H1 (cell line): ENCODE measurements at regions of chr3 and their contacts with region 1.

Region 1: DNA sequence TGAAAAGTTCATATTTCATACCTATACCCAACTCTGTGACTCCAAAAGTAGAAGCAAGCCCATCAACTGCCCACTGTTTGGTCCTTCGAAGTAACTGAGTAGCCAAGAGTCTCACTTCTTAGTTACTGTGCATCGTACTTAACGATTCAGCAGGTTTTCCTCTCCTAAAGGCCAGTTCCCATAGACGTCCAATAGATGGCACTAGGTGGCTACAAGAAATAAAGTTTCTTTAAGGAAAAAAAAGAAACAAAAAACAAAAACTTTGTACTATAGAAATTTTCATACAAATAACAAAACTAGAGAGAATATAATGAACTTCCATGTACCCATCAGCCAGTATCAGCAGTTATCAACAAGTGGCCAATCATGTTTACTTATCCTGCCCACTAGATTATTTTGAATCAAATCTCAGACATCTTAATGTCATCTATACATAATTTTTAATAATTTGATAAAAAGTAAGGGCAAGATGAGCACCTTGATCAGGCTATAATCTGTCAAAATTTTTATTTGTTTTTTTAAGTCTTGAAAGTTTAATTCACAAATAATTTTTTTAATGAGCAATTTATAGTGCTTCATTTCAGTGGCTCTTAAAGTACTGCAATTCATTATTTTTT is 63.8 kb upstream of the ACP3 start:
- DNase-seq: no peak
- H3K4me3 ChIP-seq: no peak overlapping the region
- H3K27ac ChIP-seq: no peak overlapping the region
- H3K4me1 ChIP-seq: 0 out of 7 replicates have a peak, but pooled peaks cover 0 to 2% (median 0%) of the 10 kb centered on the region in 4 experiments
- H3K27me3 ChIP-seq: no peaks in the 10 kb centered on the region
- CTCF ChIP-seq: peak in 2 of 3 experiments; percentile 57 to 68; a peak in 3 of 4 replicates
- EP300 ChIP-seq: no peak
- POLR2A ChIP-seq: no peak
- RAD21 ChIP-seq: peak; percentile 73 to 78

Region 2: DNA sequence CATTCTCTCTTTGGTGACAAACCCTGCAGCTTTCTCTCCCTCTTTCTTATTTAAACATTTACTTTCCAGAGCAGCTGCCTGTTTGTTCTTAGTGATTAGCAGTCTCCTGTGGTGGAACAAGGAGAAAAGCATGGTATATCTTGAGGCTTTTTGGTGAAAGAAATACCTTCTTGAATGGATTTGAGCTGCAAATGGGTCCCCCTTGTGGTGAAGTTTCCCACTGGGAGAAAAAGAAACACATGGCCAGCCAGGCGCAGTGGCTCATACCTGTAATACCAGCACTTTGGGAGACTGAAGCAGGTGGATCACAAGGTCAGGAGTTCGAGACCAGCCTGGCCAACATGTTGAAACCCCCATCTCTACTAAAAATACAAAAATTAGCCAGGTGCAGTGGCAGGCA is 15.6 kb after region 1 on chr3:
- CTCF ChIA-PET with region 1: interaction called, 59 read pairs
- POLR2A ChIA-PET with region 1: no interaction called
- DNase-seq: peak in 1 of 2 experiments; percentile 54
- H3K4me3 ChIP-seq: no peak overlapping the region
- H3K27ac ChIP-seq: no peak overlapping the region
- H3K4me1 ChIP-seq: peaks cover 0 to 3% (median 0%) of the 10 kb centered on the region in 4 experiments; a peak in 1 of 7 replicates
- H3K27me3 ChIP-seq: no peaks in the 10 kb centered on the region
- CTCF ChIP-seq: peak; percentile 34 to 68 (median 60)
- EP300 ChIP-seq: no peak
- POLR2A ChIP-seq: no peak
- RAD21 ChIP-seq: peak; percentile 29 to 59

Region 3: DNA sequence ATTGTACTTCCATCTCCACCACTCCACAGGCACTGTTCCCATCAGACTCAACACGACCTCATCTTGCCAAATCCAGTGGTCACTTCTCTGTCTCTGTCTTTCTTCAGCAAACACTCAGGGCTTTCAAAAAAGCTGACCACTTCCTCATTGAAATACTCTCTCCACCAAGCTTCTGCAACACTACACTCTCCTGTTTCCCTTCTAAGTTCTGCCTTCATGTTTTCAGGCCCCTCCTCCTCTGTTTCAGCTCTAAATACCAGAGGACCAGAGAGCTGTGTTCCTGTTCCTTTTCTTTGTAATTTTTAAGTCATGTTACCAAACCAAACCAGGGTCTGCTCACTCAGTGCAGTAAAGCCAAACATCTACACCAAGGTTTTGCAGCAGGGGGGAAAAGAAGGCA is 30.1 kb after region 1 on chr3:
- CTCF ChIA-PET with region 1: interaction called, 10 read pairs
- POLR2A ChIA-PET with region 1: no interaction called
- DNase-seq: no peak
- H3K4me3 ChIP-seq: no peak overlapping the region
- H3K27ac ChIP-seq: no peak overlapping the region
- H3K4me1 ChIP-seq: peaks cover 10 to 22% (median 11%) of the 10 kb centered on the region in 4 experiments
- H3K27me3 ChIP-seq: no peaks in the 10 kb centered on the region
- CTCF ChIP-seq: no peak
- EP300 ChIP-seq: no peak
- POLR2A ChIP-seq: no peak
- RAD21 ChIP-seq: no peak

Region 4: DNA sequence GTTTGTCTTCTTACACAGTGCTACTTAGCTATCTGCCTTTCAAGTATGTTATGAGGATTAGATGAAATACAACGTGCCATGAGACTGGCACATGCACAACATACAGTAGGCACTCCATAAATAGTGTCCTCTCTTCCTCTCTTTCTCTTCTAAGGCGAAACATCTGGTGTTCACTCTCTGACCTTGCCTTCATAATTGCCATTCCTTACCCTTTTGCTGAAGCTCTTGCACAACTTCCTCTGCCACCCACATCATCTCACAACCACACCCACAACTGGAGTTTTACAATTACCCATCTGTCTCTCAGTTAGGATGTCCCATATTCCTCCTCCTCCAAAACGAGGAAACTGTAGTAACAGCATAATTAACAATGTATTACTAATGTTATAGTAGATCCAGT is 37.5 kb after region 1 on chr3:
- CTCF ChIA-PET with region 1: interaction called, 10 read pairs
- POLR2A ChIA-PET with region 1: no interaction called
- DNase-seq: no peak
- H3K4me3 ChIP-seq: no peak overlapping the region
- H3K27ac ChIP-seq: no peak overlapping the region
- H3K4me1 ChIP-seq: peaks cover 0 to 8% (median 0%) of the 10 kb centered on the region in 4 experiments; a peak in 2 of 7 replicates
- H3K27me3 ChIP-seq: no peaks in the 10 kb centered on the region
- CTCF ChIP-seq: no peak
- EP300 ChIP-seq: no peak
- POLR2A ChIP-seq: no peak
- RAD21 ChIP-seq: no peak

Region 5: GRCh38 chr3:132352541-132353143 is 99.3 kb after region 1 on chr3:
- CTCF ChIA-PET with region 1: interaction called, 226 read pairs
- POLR2A ChIA-PET with region 1: no interaction called
- DNase-seq: peak in 1 of 2 experiments; percentile 76
- H3K4me3 ChIP-seq: no peak overlapping the region
- H3K27ac ChIP-seq: no peak overlapping the region
- H3K4me1 ChIP-seq: peaks cover 0 to 16% (median 8%) of the 10 kb centered on the region in 4 experiments; a peak in 3 of 7 replicates
- H3K27me3 ChIP-seq: no peaks in the 10 kb centered on the region
- CTCF ChIP-seq: peak in 2 of 3 experiments; percentile 80 to 93; a peak in 3 of 4 replicates
- EP300 ChIP-seq: no peak
- POLR2A ChIP-seq: no peak
- RAD21 ChIP-seq: peak; percentile 95 to 97

Region 6: DNA sequence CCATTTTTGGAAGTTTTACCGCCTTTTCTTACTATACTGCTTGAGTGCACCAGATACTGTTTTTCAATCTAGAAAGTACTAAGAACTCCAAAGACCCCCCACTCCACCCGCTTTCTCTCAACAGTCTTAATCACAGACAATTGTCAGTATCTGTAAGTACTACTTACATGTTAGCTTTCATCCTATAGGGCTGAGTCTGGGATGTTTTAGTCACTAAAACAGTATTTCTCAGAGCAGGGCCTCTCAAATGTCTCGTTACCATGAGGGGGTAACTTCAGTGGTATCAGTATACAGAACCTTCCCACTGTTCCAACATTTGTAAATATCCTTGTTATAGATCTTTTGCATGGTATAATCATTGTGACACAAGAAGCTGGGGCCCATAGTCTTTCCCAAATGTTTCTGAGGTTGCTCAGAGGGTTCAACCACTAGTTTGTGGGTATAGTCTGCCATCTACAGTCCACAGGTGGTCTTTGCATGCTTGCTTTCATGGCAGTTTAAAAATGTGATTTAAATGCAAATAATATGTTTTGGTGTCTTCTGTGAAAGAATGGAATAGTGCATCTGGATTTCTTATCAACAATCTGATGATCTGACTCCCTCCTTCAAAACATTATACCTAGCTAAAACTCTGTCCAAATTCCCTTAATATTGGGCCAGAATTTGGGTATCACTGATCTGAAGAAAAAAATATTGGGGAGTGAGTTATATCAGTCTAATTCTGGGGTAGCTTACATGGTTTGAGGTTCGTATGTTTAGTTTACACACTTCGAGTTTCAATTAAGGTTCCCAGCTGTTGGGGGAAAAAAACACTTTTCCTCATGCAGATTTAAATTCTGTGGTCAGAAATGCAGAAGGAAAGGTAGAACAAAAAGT is 145.9 kb after region 1 on chr3:
- CTCF ChIA-PET with region 1: interaction called, 140 read pairs
- POLR2A ChIA-PET with region 1: no interaction called
- DNase-seq: no peak
- H3K4me3 ChIP-seq: no peak overlapping the region
- H3K27ac ChIP-seq: no peak overlapping the region
- H3K4me1 ChIP-seq: 0 out of 7 replicates have a peak, but pooled peaks cover 0 to 5% (median 0%) of the 10 kb centered on the region in 4 experiments
- H3K27me3 ChIP-seq: no peaks in the 10 kb centered on the region
- CTCF ChIP-seq: peak in 2 of 3 experiments; percentile 86 to 89; a peak in 3 of 4 replicates
- EP300 ChIP-seq: peak in 1 of 2 experiments; percentile 12; a peak in 1 of 3 replicates
- POLR2A ChIP-seq: no peak
- RAD21 ChIP-seq: peak; percentile 98 to 99

Region 7: DNA sequence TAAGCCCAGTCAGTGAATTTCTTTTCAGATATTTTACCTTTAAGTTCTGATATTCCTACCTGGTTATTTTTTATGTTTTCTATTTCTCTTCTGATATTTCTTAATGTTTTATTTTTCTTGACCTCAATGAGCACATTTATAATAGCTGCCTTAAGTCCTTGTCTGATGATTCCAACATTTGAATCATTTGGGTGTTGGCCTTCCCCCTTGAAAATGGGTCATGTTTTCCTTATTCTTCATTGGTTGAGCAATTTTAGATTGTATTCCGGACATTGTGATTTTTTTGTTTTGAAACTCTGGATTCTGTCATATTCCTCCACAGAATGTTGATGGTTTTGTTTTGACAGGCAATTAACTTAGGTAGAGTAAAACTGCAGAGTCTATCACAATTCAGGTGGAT is 334.0 kb after region 1 on chr3:
- CTCF ChIA-PET with region 1: no interaction called
- POLR2A ChIA-PET with region 1: no interaction called
- DNase-seq: no peak
- H3K4me3 ChIP-seq: no peak overlapping the region
- H3K27ac ChIP-seq: no peak overlapping the region
- H3K4me1 ChIP-seq: no peaks in the 10 kb centered on the region
- H3K27me3 ChIP-seq: no peaks in the 10 kb centered on the region
- CTCF ChIP-seq: no peak
- EP300 ChIP-seq: no peak
- POLR2A ChIP-seq: no peak
- RAD21 ChIP-seq: no peak